H1 (cell line): ENCODE measurements at regions of chr1 and their contacts with region 1.

Region 1: GRCh38 chr1:247146671-247147070 is 25.1 kb downstream of the ZNF124 start:
- DNase-seq: peak in 1 of 2 experiments; percentile 19
- H3K4me3 ChIP-seq: no peak overlapping the region
- H3K27ac ChIP-seq: no peak overlapping the region
- H3K4me1 ChIP-seq: no peaks in the 10 kb centered on the region
- H3K27me3 ChIP-seq: no peaks in the 10 kb centered on the region
- CTCF ChIP-seq: peak in 2 of 3 experiments; percentile 50 to 65; a peak in 3 of 4 replicates
- EP300 ChIP-seq: no peak
- POLR2A ChIP-seq: no peak
- RAD21 ChIP-seq: peak; percentile 31 to 56

Region 2: GRCh38 chr1:247118946-247119446 is 27.7 kb before region 1 on chr1:
- CTCF ChIA-PET with region 1: interaction called, 20 read pairs
- POLR2A ChIA-PET with region 1: no interaction called
- DNase-seq: peak; percentile 89 to 93
- H3K4me3 ChIP-seq: no peak overlapping the region
- H3K27ac ChIP-seq: no peak overlapping the region
- H3K4me1 ChIP-seq: no peaks in the 10 kb centered on the region
- H3K27me3 ChIP-seq: no peaks in the 10 kb centered on the region
- CTCF ChIP-seq: peak; percentile 74 to 81 (median 81)
- EP300 ChIP-seq: no peak
- POLR2A ChIP-seq: no peak
- RAD21 ChIP-seq: peak; percentile 52 to 65

Region 3: GRCh38 chr1:247131236-247131635 is 15.4 kb before region 1 on chr1:
- CTCF ChIA-PET with region 1: interaction called, 14 read pairs
- POLR2A ChIA-PET with region 1: interaction called, 6 read pairs
- DNase-seq: no peak
- H3K4me3 ChIP-seq: no peak overlapping the region
- H3K27ac ChIP-seq: no peak overlapping the region
- H3K4me1 ChIP-seq: peaks cover 0 to 3% (median 0%) of the 10 kb centered on the region in 4 experiments; a peak in 1 of 7 replicates
- H3K27me3 ChIP-seq: no peaks in the 10 kb centered on the region
- CTCF ChIP-seq: no peak
- EP300 ChIP-seq: no peak
- POLR2A ChIP-seq: no peak
- RAD21 ChIP-seq: no peak

Region 4: GRCh38 chr1:247164694-247165093 is 18.0 kb after region 1 on chr1:
- CTCF ChIA-PET with region 1: interaction called, 13 read pairs
- POLR2A ChIA-PET with region 1: no interaction called
- DNase-seq: no peak
- H3K4me3 ChIP-seq: no peak overlapping the region
- H3K27ac ChIP-seq: no peak overlapping the region
- H3K4me1 ChIP-seq: peaks cover 0 to 2% (median 0%) of the 10 kb centered on the region in 4 experiments; a peak in 1 of 7 replicates
- H3K27me3 ChIP-seq: no peaks in the 10 kb centered on the region
- CTCF ChIP-seq: no peak
- EP300 ChIP-seq: no peak
- POLR2A ChIP-seq: no peak
- RAD21 ChIP-seq: no peak

Region 5: DNA sequence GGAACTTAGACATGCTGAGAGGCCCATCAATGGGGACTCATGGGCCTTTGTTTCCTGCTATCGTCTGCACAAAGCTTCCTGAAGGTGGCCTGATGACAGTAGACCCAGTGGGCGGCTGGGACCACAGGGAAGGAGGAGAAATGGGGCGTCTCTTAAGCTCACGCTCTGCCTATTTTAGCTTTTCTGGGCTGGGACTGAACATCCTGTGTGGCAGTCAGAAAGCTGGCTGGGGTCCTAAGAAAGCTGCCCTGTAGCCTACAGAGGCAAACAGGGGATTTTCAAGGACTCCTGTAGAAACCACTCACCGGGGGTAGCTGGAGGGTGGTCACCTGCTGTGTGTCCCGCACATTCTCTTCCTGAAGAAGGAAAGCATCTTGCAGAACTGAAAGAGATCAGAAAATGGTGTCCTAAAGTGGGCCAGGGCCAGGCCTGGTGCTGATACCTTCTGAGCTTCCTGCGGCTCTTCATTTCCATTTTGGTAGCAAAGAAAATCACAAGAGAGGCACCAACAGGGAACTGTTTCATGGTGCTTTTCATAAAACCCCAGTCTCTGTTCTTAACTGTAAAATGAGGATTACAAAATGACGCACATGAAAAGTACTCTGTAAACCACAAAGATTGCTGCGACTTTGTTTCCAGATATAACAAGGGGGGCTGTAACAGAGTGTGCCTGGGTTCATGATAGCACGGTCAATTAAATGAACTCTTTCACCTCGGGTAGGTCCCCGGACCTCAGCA is 176.3 kb after region 1 on chr1:
- CTCF ChIA-PET with region 1: no interaction called
- POLR2A ChIA-PET with region 1: no interaction called
- DNase-seq: no peak
- H3K4me3 ChIP-seq: no peak overlapping the region
- H3K27ac ChIP-seq: no peak overlapping the region
- H3K4me1 ChIP-seq: peaks cover 0 to 6% (median 1%) of the 10 kb centered on the region in 4 experiments; a peak in 1 of 7 replicates
- H3K27me3 ChIP-seq: no peaks in the 10 kb centered on the region
- CTCF ChIP-seq: no peak
- EP300 ChIP-seq: no peak
- POLR2A ChIP-seq: no peak
- RAD21 ChIP-seq: no peak